HepG2 (cell line): ENCODE measurements at regions of chr7 and their contacts with region 1.

Region 1: DNA sequence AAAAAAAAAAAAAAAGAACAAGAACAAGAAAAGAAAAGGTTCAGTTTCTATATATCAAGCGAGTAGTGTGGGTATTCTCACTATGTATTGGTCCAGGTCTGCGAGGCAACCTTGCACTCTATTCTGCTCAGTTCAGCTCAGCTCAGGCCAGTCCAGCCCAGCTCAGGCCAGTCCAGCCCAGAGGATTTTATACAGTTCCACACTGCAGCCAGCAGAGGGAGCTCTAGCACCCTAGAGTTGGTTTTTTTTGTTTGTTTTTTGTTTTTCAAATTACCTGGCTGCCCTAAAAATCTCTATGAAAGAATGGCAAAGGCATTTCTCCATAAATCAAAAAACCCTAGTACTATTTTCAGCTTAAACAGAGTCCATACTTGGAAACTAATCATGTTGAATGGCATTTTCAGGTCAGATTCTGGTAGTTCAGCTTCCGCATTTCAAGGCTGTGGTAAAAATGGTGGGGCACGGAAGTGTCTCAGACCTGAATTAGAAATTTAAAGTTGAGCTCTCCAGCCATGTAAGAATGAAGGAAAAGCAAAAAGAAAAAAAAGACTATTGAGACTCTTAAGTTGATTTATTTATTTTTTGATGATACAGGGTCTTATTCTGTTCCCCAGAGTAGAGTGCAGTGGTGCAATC is 55.2 kb upstream of the GSDME start:
- DNase-seq: peak; percentile 46
- ATAC-seq: peak; percentile 96
- H3K4me3 ChIP-seq: no peak overlapping the region
- H3K27ac ChIP-seq: no peak overlapping the region
- H3K4me1 ChIP-seq: no peaks in the 10 kb centered on the region
- H3K27me3 ChIP-seq: no peaks in the 10 kb centered on the region
- CTCF ChIP-seq: peak; percentile 80
- EP300 ChIP-seq: no peak
- POLR2A ChIP-seq: no peak
- RAD21 ChIP-seq: peak; percentile 68

Region 2: DNA sequence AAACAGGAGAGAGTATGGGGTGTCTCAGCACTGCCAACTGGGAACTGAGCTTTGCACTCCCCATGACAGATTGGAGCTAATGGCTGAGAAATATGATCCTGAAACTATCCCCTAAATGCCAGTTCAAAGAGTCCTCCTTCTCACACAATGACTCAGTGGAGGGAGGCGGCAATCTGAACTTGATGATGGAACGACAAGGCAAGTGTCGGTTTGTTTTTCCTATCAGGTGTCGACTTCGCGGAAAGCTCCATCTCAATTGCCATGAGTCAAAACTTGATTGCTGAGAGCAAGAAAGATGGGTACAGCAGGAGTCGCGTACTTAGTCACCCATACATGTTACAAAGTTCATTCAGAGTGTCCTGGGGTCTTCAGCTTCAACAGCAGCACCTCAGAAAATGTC is 476.0 kb before region 1 on chr7:
- CTCF ChIA-PET with region 1: no interaction called
- POLR2A ChIA-PET with region 1: no interaction called
- in situ Hi-C with region 1: no loop called
- intact Hi-C with region 1: no loop called
- DNase-seq: peak; percentile 5
- ATAC-seq: no peak
- H3K4me3 ChIP-seq: no peak overlapping the region
- H3K27ac ChIP-seq: no peak overlapping the region
- H3K4me1 ChIP-seq: no peaks in the 10 kb centered on the region
- H3K27me3 ChIP-seq: peaks cover 0 to 4% of the 10 kb centered on the region in 2 experiments; a peak in 1 of 5 replicates
- CTCF ChIP-seq: no peak
- EP300 ChIP-seq: no peak
- POLR2A ChIP-seq: no peak
- RAD21 ChIP-seq: no peak

Region 3: GRCh38 chr7:24630596-24630995 is 181.8 kb before region 1 on chr7:
- CTCF ChIA-PET with region 1: no interaction called
- POLR2A ChIA-PET with region 1: no interaction called
- in situ Hi-C with region 1: no loop called
- intact Hi-C with region 1: no loop called
- DNase-seq: no peak
- ATAC-seq: no peak
- H3K4me3 ChIP-seq: no peak overlapping the region
- H3K27ac ChIP-seq: no peak overlapping the region
- H3K4me1 ChIP-seq: no peaks in the 10 kb centered on the region
- H3K27me3 ChIP-seq: no peaks in the 10 kb centered on the region
- CTCF ChIP-seq: no peak
- EP300 ChIP-seq: no peak
- POLR2A ChIP-seq: no peak
- RAD21 ChIP-seq: no peak

Region 4: GRCh38 chr7:24882989-24883621 is 70.7 kb after region 1 on chr7:
- CTCF ChIA-PET with region 1: interaction called, 18 read pairs
- POLR2A ChIA-PET with region 1: interaction called, 4 read pairs
- in situ Hi-C with region 1: loop called (anchors 5 kb)
- intact Hi-C with region 1: loop called (anchors 1 kb)
- DNase-seq: no peak
- ATAC-seq: no peak
- H3K4me3 ChIP-seq: no peak overlapping the region
- H3K27ac ChIP-seq: no peak overlapping the region
- H3K4me1 ChIP-seq: no peaks in the 10 kb centered on the region
- H3K27me3 ChIP-seq: no peaks in the 10 kb centered on the region
- CTCF ChIP-seq: no peak
- EP300 ChIP-seq: no peak
- POLR2A ChIP-seq: no peak
- RAD21 ChIP-seq: no peak

Region 5: DNA sequence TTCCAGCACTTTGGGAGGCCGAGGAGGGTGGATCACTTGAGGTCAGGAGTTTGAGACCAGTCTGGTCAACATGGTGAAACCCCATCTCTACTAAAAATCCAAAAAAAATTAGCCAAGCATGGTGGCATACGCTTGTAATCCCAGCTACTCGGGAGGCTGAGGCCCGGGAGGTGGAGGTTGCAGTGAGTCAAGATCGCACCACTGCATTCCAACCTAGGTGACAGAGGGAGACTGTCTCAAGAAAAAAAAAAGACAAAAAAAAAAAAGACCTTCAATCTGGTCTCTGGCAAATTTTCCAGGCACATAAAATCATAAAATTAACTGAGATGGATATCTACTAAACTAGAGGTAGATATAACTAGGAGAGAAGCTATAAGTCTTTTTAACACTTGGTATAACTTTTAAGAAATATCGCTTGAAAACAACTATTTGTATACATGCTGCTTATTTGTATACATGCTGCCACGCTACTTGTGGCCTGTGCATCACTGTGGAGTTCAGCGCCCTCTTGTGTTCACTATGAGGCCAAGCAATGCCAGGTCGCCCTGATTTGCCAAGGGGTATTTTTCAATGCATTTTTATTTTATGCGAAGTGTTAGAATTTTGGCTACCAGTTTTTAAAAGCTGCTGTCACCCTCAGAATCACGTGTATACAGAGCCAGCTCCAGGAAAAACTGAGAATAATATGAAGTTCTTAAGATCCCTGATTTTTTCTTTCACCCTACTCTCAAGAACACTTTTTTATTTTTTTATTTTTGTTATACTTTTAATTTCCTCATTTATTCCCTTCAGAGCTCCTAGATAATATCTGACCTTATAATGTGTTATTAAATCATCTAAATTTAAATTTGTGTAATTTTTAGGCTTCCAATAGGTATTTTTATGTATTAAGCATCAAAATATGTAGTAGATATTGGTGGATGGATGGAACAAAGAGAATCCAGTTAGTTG is 285.9 kb after region 1 on chr7:
- CTCF ChIA-PET with region 1: interaction called, 24 read pairs
- POLR2A ChIA-PET with region 1: no interaction called
- in situ Hi-C with region 1: loop called (anchors 5 kb)
- intact Hi-C with region 1: loop called (anchors 1 kb)
- DNase-seq: peak; percentile 58
- ATAC-seq: peak; percentile 64
- H3K4me3 ChIP-seq: no peak overlapping the region
- H3K27ac ChIP-seq: no peak overlapping the region
- H3K4me1 ChIP-seq: peaks cover 36% of the 10 kb centered on the region
- H3K27me3 ChIP-seq: no peaks in the 10 kb centered on the region
- CTCF ChIP-seq: peak; percentile 83
- EP300 ChIP-seq: no peak
- POLR2A ChIP-seq: no peak
- RAD21 ChIP-seq: peak; percentile 59

Region 6: GRCh38 chr7:25259587-25260243 is 447.3 kb after region 1 on chr7:
- CTCF ChIA-PET with region 1: no interaction called
- POLR2A ChIA-PET with region 1: no interaction called
- in situ Hi-C with region 1: no loop called
- intact Hi-C with region 1: no loop called
- DNase-seq: peak; percentile 74
- ATAC-seq: peak; percentile 90
- H3K4me3 ChIP-seq: no peak overlapping the region
- H3K27ac ChIP-seq: no peak overlapping the region
- H3K4me1 ChIP-seq: no peaks in the 10 kb centered on the region
- H3K27me3 ChIP-seq: no peaks in the 10 kb centered on the region; a peak in 1 of 5 replicates
- CTCF ChIP-seq: peak; percentile 86
- EP300 ChIP-seq: no peak
- POLR2A ChIP-seq: no peak
- RAD21 ChIP-seq: peak; percentile 77